SK-N-SH (cell line): ENCODE measurements at regions of chr1 and their contacts with region 1.

Region 1: GRCh38 chr1:67524143-67525052 is 94.2 kb upstream of the SERBP1 start:
- DNase-seq: no peak
- H3K4me3 ChIP-seq: no peak overlapping the region
- H3K27ac ChIP-seq: no peak overlapping the region
- H3K4me1 ChIP-seq: no peaks in the 10 kb centered on the region
- H3K27me3 ChIP-seq: no peaks in the 10 kb centered on the region
- CTCF ChIP-seq: peak; percentile 35
- EP300 ChIP-seq: no peak
- RAD21 ChIP-seq: no peak

Region 2: DNA sequence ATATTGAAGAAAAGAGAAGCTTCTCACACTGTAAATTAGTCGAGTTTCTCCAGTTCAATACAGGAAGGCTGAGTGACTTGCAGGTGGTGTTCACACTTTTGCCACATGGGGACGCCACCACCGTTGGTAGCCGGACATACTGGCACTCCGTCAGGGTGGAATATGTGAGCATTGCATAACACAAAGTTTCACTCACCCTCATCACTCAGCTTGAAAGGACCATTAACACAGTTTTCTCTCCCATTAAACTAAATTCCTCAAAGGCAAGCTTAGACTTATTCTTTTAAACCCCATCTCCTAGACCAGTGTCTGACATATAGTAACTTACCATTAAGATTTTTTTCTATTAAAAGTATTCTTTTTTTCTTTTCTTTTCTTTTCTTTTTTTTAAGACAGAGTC is 11.1 kb after region 1 on chr1:
- CTCF ChIA-PET with region 1: interaction called, 10 read pairs
- POLR2A ChIA-PET with region 1: no interaction called
- DNase-seq: peak; percentile 69
- H3K4me3 ChIP-seq: no peak overlapping the region
- H3K27ac ChIP-seq: no peak overlapping the region
- H3K4me1 ChIP-seq: no peaks in the 10 kb centered on the region; a peak in 1 of 4 replicates
- H3K27me3 ChIP-seq: no peaks in the 10 kb centered on the region
- CTCF ChIP-seq: peak; percentile 99
- EP300 ChIP-seq: no peak
- RAD21 ChIP-seq: peak; percentile 87

Region 3: DNA sequence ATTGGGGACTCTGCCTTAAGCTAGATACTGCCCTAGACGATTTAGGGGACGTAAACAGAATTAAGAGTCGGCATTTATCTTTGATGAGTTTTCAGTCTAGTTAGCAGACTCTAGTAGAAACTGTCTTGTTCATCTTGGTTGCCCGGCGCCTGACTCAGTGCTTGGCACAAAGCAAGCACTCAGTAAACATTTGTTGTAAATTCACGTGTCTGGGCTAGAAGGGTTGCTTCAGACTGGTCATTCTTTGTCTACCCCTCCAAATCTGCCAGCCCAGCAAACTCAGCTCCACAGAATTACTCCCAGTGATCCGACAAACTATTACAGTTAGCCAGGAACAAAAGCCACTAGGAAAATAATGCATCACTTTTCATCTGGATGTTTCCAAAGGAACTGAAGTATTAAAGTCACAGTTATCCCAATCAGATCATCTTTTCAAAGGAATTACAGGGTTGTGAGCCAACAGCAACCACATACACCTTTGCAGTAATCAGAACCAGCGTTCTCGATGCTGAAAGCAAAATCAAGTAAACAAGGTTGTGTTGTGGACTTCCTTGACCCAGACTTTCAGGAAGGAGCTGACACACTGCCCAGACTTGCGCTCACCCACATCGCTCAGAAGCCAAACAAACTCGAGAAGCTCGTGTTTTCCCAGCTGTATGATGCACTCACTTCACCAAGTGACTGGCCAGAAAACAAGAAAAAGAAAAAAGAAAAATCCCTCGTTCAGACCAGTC is 94.1 kb after region 1 on chr1:
- CTCF ChIA-PET with region 1: no interaction called
- POLR2A ChIA-PET with region 1: no interaction called
- DNase-seq: no peak
- H3K4me3 ChIP-seq: no peak overlapping the region
- H3K27ac ChIP-seq: peak overlapping the region in 1 of 2 experiments; percentile 35; a peak in 1 of 4 replicates
- H3K4me1 ChIP-seq: no peaks in the 10 kb centered on the region; a peak in 1 of 4 replicates
- H3K27me3 ChIP-seq: no peaks in the 10 kb centered on the region
- CTCF ChIP-seq: no peak
- EP300 ChIP-seq: no peak
- RAD21 ChIP-seq: no peak